CD4-positive, alpha-beta memory T cell (primary cell): ENCODE measurements at regions of chr19 and their contacts with region 1.

Region 1: GRCh38 chr19:51473009-51473707 is 5.2 kb upstream of the CEACAM18 start:
- DNase-seq: peak; percentile 57 to 68 (median 61)
- H3K4me3 ChIP-seq: no peak overlapping the region
- H3K4me3 Mint-ChIP-seq: no peak overlapping the region
- H3K27ac ChIP-seq: no peak overlapping the region
- H3K27ac Mint-ChIP-seq: no peak overlapping the region
- H3K4me1 ChIP-seq: no peaks in the 10 kb centered on the region
- H3K4me1 Mint-ChIP-seq: peaks cover 0 to 2% (median 1%) of the 10 kb centered on the region in 4 donors
- H3K27me3 ChIP-seq: peaks cover 4% of the 10 kb centered on the region
- H3K27me3 Mint-ChIP-seq: peaks cover 9 to 24% of the 10 kb centered on the region in 2 donors

Region 2: GRCh38 chr19:51327066-51328001 is 145.8 kb before region 1 on chr19:
- CTCF ChIA-PET with region 1: no interaction called
- POLR2A ChIA-PET with region 1: no interaction called
- intact Hi-C with region 1: no loop called
- DNase-seq: peak; percentile 29 to 59 (median 39)
- H3K4me3 ChIP-seq: no peak overlapping the region
- H3K4me3 Mint-ChIP-seq: peak overlapping the region in 5 of 8 donors; percentile 49 to 70 (median 59)
- H3K27ac ChIP-seq: no peak overlapping the region
- H3K27ac Mint-ChIP-seq: peak overlapping the region in 2 of 7 donors; percentile 47 to 48
- H3K4me1 ChIP-seq: peaks cover 9% of the 10 kb centered on the region
- H3K4me1 Mint-ChIP-seq: peaks cover 4 to 22% (median 5%) of the 10 kb centered on the region in 4 donors
- H3K27me3 ChIP-seq: peaks cover 21% of the 10 kb centered on the region
- H3K27me3 Mint-ChIP-seq: peaks cover 39 to 41% of the 10 kb centered on the region in 2 donors

Region 3: GRCh38 chr19:51422053-51422448 is 51.1 kb before region 1 on chr19:
- CTCF ChIA-PET with region 1: interaction called, 41 read pairs
- POLR2A ChIA-PET with region 1: no interaction called
- intact Hi-C with region 1: loop called (anchors 2 kb)
- DNase-seq: peak; percentile 67 to 75 (median 69)
- H3K4me3 ChIP-seq: no peak overlapping the region
- H3K4me3 Mint-ChIP-seq: no peak overlapping the region
- H3K27ac ChIP-seq: no peak overlapping the region
- H3K27ac Mint-ChIP-seq: peak overlapping the region in 1 of 7 donors; percentile 24
- H3K4me1 ChIP-seq: no peaks in the 10 kb centered on the region
- H3K4me1 Mint-ChIP-seq: peaks cover 0 to 8% (median 3%) of the 10 kb centered on the region in 4 donors
- H3K27me3 ChIP-seq: no peaks in the 10 kb centered on the region
- H3K27me3 Mint-ChIP-seq: peaks cover 8 to 18% of the 10 kb centered on the region in 2 donors

Region 4: DNA sequence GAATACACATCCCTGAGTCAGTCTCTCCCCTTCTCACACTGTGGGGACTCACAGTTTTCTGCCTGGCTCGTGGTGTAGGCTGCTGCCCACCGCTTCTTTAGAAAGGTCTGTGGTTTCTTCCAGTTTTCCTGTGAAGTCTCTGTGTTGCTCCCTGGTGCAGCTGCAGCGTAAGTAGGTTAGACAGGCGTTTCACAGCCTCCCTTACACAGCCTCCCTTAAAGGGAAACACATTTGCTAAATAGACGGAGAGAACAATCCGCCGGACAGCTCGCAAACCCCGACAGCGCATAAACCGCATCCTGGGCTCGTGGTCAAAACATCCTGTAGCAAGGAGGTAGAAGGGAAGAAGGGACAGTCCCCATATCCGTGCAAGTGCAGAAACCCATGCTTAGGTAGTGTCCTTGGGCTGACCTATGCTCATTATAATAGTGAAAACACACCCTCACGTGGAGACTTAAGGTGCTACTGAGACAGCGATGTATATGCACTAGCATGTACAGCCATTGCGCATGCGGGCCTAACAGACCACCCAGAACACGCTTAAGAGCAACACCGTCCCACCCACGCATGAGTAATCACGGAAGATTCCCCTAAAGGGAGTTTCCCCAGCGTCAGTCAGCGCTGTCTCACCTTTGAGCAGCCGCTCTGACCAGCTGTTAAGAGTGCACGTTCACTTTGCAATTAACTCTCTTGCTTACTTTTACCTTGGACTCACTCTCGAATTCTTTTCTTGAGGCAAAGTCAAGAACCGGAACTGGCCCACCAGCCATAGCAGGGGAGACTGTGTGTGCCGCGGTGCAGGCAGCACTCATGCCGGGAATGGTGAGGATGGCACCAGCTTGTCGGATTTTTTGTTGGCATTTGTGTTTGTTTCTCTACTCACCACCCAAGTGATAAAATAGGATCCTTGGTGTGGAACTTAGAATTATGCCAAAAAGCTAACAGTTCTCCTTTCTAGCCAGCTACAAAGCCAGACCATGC is 31.5 kb before region 1 on chr19:
- CTCF ChIA-PET with region 1: interaction called, 31 read pairs
- POLR2A ChIA-PET with region 1: interaction called, 6 read pairs
- intact Hi-C with region 1: loop called (anchors 1 kb)
- DNase-seq: peak; percentile 81 to 95 (median 85)
- H3K4me3 ChIP-seq: peak overlapping the region; percentile 17 to 36
- H3K4me3 Mint-ChIP-seq: peak overlapping the region; percentile 73 to 91 (median 84)
- H3K27ac ChIP-seq: peak overlapping the region; percentile 70
- H3K27ac Mint-ChIP-seq: peak overlapping the region; percentile 85 to 98 (median 94)
- H3K4me1 ChIP-seq: peaks cover 47% of the 10 kb centered on the region
- H3K4me1 Mint-ChIP-seq: peaks cover 24 to 48% (median 36%) of the 10 kb centered on the region in 4 donors
- H3K27me3 ChIP-seq: no peaks in the 10 kb centered on the region
- H3K27me3 Mint-ChIP-seq: peaks cover 3 to 5% of the 10 kb centered on the region in 2 donors

Region 5: GRCh38 chr19:51503286-51503817 is 30.2 kb after region 1 on chr19:
- CTCF ChIA-PET with region 1: no interaction called
- POLR2A ChIA-PET with region 1: no interaction called
- intact Hi-C with region 1: no loop called
- DNase-seq: no peak
- H3K4me3 ChIP-seq: no peak overlapping the region
- H3K4me3 Mint-ChIP-seq: no peak overlapping the region
- H3K27ac ChIP-seq: no peak overlapping the region
- H3K27ac Mint-ChIP-seq: no peak overlapping the region
- H3K4me1 ChIP-seq: peaks cover 6% of the 10 kb centered on the region
- H3K4me1 Mint-ChIP-seq: peaks cover 0 to 6% (median 2%) of the 10 kb centered on the region in 4 donors
- H3K27me3 ChIP-seq: no peaks in the 10 kb centered on the region
- H3K27me3 Mint-ChIP-seq: peaks cover 2 to 4% of the 10 kb centered on the region in 2 donors

Region 6: GRCh38 chr19:51514866-51515481 is 41.8 kb after region 1 on chr19:
- CTCF ChIA-PET with region 1: interaction called, 11 read pairs
- POLR2A ChIA-PET with region 1: no interaction called
- intact Hi-C with region 1: loop called (anchors 1 kb)
- DNase-seq: peak; percentile 33 to 44 (median 38)
- H3K4me3 ChIP-seq: no peak overlapping the region
- H3K4me3 Mint-ChIP-seq: no peak overlapping the region
- H3K27ac ChIP-seq: no peak overlapping the region
- H3K27ac Mint-ChIP-seq: peak overlapping the region in 1 of 7 donors; percentile 57
- H3K4me1 ChIP-seq: no peaks in the 10 kb centered on the region
- H3K4me1 Mint-ChIP-seq: no peaks in the 10 kb centered on the region
- H3K27me3 ChIP-seq: peaks cover 4% of the 10 kb centered on the region
- H3K27me3 Mint-ChIP-seq: peaks cover 21 to 22% of the 10 kb centered on the region in 2 donors

Region 7: DNA sequence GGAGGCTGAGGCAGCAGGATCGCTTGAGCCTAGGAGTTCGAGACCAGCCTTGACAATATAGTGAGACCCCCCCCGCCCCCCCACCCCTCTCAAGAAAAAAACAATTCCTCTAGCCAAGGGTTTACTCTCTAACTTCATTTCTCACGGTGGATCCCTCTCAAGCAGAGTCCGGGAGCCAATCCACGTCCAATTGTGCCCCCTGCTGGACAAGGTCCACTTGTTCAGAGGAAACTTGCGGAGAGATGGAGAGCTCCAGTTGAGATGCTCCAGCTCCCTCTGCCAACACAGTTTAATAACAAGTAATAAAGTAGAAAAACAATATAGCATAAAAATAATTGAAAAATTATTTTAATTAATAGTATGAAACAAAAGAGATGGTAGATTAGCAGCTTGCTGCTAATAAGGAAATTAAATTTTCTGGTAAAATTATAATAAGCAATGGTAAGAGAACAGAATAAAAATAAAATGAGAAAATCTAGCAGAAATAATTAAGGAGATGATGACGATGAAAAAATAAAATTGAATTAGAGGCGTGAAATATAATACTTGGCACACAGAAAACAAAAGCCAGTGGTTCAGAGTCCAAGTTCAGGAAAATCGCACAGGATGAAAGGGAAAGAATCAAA is 187.9 kb after region 1 on chr19:
- CTCF ChIA-PET with region 1: interaction called, 24 read pairs
- POLR2A ChIA-PET with region 1: no interaction called
- intact Hi-C with region 1: loop called (anchors 1 kb)
- DNase-seq: peak in 4 of 5 donors; percentile 13 to 56 (median 24)
- H3K4me3 ChIP-seq: no peak overlapping the region
- H3K4me3 Mint-ChIP-seq: no peak overlapping the region
- H3K27ac ChIP-seq: no peak overlapping the region
- H3K27ac Mint-ChIP-seq: no peak overlapping the region
- H3K4me1 ChIP-seq: peaks cover 3% of the 10 kb centered on the region
- H3K4me1 Mint-ChIP-seq: peaks cover 5 to 6% (median 6%) of the 10 kb centered on the region in 4 donors
- H3K27me3 ChIP-seq: no peaks in the 10 kb centered on the region
- H3K27me3 Mint-ChIP-seq: peaks cover 20 to 26% of the 10 kb centered on the region in 2 donors

Region 8: DNA sequence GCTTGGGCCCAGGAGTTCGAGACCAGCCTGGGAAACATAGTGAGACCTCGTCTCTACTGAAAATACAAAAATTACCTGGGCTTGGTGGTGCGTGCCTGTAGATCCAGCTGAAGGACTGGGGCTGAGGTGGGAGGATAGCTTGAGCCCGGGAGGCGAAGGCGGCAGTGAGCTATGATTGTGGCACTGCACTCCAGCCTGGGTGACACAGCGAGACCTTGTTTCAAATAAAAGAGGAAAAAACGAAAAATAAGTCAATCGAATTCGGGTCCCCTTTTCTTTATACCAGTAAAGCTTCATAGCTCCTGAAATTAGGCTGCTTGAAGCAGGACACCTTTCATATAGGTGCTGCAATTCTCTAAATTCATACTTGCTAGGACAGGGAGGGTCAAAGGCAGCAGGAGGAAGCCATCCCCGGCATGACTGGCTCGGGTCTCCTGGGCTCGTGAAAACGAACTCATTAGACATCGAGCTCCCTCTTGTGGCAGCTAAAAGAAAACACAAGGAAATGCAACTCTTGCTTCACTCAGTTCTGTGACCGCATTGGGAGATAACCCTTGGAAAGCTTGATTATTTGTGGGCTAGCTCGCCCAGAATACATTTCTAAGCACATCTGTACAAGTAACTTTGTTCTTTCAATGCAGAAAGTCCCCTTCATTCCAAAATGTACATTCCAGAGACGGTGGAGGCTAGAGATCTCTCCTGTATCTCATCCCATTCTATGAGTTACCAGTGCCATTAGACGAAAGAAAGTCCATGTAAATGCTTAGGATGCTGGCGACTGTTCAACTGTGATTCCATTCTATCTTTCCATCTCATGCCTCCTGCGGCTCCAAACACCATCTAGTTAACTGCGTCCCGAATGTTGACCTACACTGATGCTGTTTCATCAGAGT is 304.7 kb after region 1 on chr19:
- CTCF ChIA-PET with region 1: interaction called, 14 read pairs
- POLR2A ChIA-PET with region 1: no interaction called
- intact Hi-C with region 1: loop called (anchors 1 kb)
- DNase-seq: peak; percentile 28 to 48 (median 31)
- H3K4me3 ChIP-seq: no peak overlapping the region
- H3K4me3 Mint-ChIP-seq: no peak overlapping the region
- H3K27ac ChIP-seq: no peak overlapping the region
- H3K27ac Mint-ChIP-seq: no peak overlapping the region
- H3K4me1 ChIP-seq: no peaks in the 10 kb centered on the region
- H3K4me1 Mint-ChIP-seq: peaks cover 0 to 2% (median 0%) of the 10 kb centered on the region in 4 donors
- H3K27me3 ChIP-seq: no peaks in the 10 kb centered on the region
- H3K27me3 Mint-ChIP-seq: peaks cover 35 to 49% of the 10 kb centered on the region in 2 donors

Region 9: DNA sequence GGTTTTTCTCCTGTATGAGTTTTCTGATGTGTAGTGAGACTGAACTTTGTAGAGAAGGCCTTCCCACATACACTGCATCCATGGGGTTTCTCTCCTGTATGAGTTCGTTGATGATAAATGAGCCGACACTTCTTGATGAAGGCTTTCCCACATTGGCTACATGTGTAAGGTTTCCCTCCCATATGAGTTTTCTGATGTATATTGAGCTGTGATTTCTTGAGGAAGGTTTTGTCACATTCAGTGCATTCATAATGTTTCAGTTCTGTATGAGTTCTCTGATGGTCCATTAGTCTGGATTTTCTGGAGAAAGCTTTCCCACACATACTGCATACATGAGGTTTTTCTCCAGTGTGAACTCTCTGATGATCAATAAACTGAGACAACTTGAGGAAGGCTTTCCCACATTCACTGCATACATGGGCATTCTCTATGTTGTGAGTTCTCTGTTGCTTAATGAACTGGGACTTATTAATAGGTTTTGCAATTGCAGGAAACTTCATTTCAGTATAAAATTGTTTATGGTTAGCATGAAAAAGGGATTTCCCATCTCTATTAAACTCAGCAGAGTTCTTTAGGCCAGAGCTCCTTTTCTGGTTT is 521.0 kb after region 1 on chr19:
- CTCF ChIA-PET with region 1: no interaction called
- POLR2A ChIA-PET with region 1: no interaction called
- intact Hi-C with region 1: no loop called
- DNase-seq: no peak
- H3K4me3 ChIP-seq: peak overlapping the region in 1 of 2 donors; percentile 32
- H3K4me3 Mint-ChIP-seq: no peak overlapping the region
- H3K27ac ChIP-seq: no peak overlapping the region
- H3K27ac Mint-ChIP-seq: no peak overlapping the region
- H3K4me1 ChIP-seq: no peaks in the 10 kb centered on the region
- H3K4me1 Mint-ChIP-seq: no peaks in the 10 kb centered on the region
- H3K27me3 ChIP-seq: no peaks in the 10 kb centered on the region
- H3K27me3 Mint-ChIP-seq: no peaks in the 10 kb centered on the region

Region 10: GRCh38 chr19:53103198-53103944 is 1630.2 kb after region 1 on chr19 and contains the start of gene ZNF160:
- CTCF ChIA-PET with region 1: no interaction called
- POLR2A ChIA-PET with region 1: no interaction called
- intact Hi-C with region 1: no loop called
- DNase-seq: peak; percentile 97 to 98 (median 97)
- H3K4me3 ChIP-seq: peak within 1 kb of the TSS; percentile 92 to 96
- H3K4me3 Mint-ChIP-seq: peak within 1 kb of the TSS; percentile 87 to 96 (median 95)
- H3K27ac ChIP-seq: peak within 1 kb of the TSS; percentile 84
- H3K27ac Mint-ChIP-seq: peak within 1 kb of the TSS; percentile 91 to 98 (median 95)
- H3K4me1 ChIP-seq: peaks cover 27% of the 10 kb centered on the region
- H3K4me1 Mint-ChIP-seq: peaks cover 20 to 46% (median 32%) of the 10 kb centered on the region in 4 donors
- H3K27me3 ChIP-seq: no peaks in the 10 kb centered on the region
- H3K27me3 Mint-ChIP-seq: no peaks in the 10 kb centered on the region
- total RNA-seq, gene ZNF160: 72.0 to 81.1 TPM